Posterior cingulate gyrus (tissue), 11 donors: ENCODE measurements at regions of chr1 and their contacts with region 1.

Region 1: DNA sequence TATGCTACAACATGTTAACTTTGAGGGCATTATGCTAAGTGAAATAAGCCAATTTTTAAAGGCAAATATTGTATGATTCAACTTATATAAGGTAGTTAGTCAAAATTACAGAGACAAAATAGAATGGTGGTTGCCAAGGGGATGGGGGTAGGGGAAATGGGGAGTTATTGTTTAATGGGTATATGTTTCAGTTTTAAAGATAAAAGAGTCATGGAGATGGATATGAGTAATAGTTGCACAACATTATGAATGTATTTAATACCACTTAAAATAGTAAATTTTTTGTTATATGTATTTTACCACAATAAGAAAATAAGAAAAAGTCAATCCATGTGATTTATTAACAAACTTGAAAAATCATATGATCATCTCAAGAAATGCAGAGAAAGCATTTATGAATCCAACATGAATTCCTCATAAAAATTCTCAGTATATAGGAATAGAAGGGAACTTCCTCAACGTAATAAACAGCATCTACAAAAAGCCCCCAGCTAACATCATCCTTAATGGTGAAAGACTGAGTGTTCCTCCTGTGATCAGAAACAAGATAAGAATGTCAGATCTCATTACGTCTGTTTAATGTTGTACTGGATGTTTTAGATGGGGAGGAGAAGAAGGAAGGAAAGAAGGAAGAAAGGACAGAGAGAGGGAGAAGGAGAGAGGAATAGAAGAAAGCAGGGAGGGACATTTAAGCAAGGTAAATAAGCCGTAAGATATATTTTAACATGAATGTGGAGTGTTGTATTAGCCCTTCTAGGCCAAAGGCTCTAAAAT is 6.7 kb upstream of the TSEN15 start:
- DNase-seq: no peak

Region 2: GRCh38 chr1:183646776-183647175 is 398.0 kb before region 1 on chr1:
- intact Hi-C with region 1: loop called (anchors 5 kb)
- DNase-seq: no peak